Heart left ventricle (tissue), 16 donors: ENCODE measurements at regions of chr14 and their contacts with region 1.

Region 1: GRCh38 chr14:45519766-45520165 is 266.8 kb upstream of the MIS18BP1 start:
- DNase-seq: no peak
- ATAC-seq: no peak
- H3K4me3 ChIP-seq: no peak overlapping the region
- H3K27ac ChIP-seq: no peak overlapping the region
- H3K4me1 ChIP-seq: no peaks in the 10 kb centered on the region
- H3K27me3 ChIP-seq: no peaks in the 10 kb centered on the region
- CTCF ChIP-seq: no peak
- POLR2A ChIP-seq: no peak

Region 2: DNA sequence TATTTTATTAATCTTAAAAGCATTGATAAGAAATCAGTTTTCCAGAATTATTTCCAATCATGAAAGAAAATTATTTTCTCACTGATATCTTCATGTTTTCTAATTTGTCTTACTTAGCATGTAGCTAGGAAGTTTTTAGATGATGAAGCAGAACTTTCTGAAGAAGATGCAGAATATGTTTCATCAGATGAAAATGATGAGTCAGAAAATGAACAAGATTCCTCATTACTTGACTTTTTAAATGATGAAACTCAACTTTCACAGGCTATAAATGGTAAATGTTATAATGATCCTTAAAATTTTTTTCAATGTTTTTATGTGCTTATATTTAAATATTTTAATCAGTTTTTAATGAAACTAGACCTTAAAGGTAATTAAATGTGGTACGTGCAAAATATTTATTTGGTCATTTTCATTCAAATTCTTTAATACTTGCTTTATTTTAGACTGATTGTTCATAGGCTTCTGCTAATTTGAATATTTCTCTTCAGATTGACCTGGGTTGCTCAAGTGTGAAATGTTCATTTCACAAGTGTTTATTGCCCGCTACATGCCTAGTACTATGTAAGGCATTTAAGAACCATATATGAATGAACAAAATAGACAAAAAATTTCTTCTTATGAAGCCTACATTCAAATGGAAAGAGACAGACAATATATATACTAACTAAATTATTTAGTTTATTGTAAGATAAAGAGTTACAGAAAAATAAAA is 334.5 kb before region 1 on chr14:
- intact Hi-C with region 1: no loop called
- DNase-seq: no peak
- ATAC-seq: no peak
- H3K4me3 ChIP-seq: no peak overlapping the region
- H3K27ac ChIP-seq: no peak overlapping the region
- H3K4me1 ChIP-seq: no peaks in the 10 kb centered on the region
- H3K27me3 ChIP-seq: no peaks in the 10 kb centered on the region
- CTCF ChIP-seq: no peak
- POLR2A ChIP-seq: no peak

Region 3: DNA sequence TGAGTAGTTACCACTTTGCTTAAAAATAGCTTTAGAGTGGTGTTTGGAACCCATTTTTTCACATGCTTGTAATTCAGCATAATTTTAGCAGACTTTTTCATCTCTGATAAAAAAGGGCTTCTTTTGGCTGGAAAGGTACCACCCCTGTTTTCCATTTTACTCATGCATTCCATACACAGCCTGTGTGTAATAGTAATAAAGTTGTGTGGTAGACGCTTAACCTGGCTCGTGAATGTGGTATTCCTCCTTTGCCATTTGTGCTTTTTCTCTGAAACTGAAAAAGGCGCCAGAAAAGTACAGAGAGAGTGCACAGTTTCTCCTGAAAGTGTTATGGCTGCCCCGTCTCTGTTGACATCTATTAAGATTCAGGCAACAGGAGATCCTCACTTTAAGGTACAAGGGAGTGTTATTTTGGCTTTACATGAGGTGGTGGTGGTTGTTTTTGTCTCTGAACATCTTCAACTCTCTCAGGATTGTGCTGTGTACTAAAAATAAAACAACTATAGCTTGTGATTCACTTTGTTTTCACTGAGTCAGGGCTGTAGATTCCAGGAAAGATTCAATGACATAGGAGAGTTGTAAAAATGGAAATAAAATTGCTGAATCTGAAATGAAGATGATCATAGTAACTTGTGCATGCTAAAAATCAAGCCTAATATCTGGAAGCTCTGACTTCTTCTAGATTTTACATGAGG is 221.2 kb before region 1 on chr14:
- intact Hi-C with region 1: loop called in 1 of 10 experiments (anchors 10 kb)
- DNase-seq: no peak
- ATAC-seq: no peak
- H3K4me3 ChIP-seq: no peak overlapping the region
- H3K27ac ChIP-seq: no peak overlapping the region
- H3K4me1 ChIP-seq: no peaks in the 10 kb centered on the region
- H3K27me3 ChIP-seq: no peaks in the 10 kb centered on the region
- CTCF ChIP-seq: no peak
- POLR2A ChIP-seq: no peak